ENCODE measurements at regions of chr11 and their contacts with region 1.

Region 1: DNA sequence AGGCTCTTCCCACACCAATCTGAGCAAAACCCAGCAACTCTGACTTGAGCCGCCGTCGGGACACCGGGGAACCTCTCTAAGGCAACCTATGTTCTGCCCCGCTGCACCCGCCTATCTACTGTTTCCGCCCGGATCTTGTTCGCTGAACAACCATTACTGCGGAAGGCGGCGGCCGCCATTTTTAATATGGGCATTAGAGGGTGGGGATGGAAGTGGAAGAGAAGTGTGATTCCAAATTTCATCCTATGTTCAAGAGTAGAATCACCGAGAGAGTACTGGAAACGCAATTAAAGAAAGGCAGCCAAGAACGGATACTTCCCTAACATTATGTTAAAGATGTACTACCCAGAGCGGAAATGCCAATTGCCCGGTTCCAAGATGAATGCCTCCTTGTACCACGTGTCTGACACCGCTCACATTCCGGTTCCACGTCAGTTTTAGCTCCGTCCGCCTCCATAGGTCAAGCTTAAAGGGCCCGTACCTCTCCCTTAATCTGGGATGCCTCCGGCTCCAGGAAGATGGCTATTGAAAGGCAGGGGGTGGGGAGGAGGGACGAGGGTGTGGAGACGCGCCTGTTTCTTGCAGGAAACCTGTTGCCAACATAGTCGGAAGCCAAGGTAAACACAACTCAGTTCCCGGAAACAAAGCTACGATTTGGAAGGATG is at the start of gene DPAGT1:
- DNase-seq: peak; percentile 93
- ATAC-seq: peak; percentile 82
- H3K4me3 Mint-ChIP-seq: peak within 1 kb of the TSS; percentile 91
- H3K27ac Mint-ChIP-seq: peak within 1 kb of the TSS; percentile 97
- H3K4me1 Mint-ChIP-seq: peaks cover 33% of the 10 kb centered on the region
- H3K27me3 Mint-ChIP-seq: no peaks in the 10 kb centered on the region
- CTCF ChIP-seq: no peak
- total RNA-seq, gene DPAGT1: 51.1 to 52.2 TPM

Region 2: GRCh38 chr11:119067371-119068222 is 34.3 kb before region 1 on chr11 and contains the start of gene VPS11:
- CTCF ChIA-PET with region 1: interaction called, 7 read pairs
- POLR2A ChIA-PET with region 1: interaction called, 10 read pairs
- intact Hi-C with region 1: no loop called
- DNase-seq: peak; percentile 99
- ATAC-seq: peak; percentile 98
- H3K4me3 Mint-ChIP-seq: peak within 1 kb of the TSS; percentile 87
- H3K27ac Mint-ChIP-seq: peak within 1 kb of the TSS; percentile 94
- H3K4me1 Mint-ChIP-seq: peaks cover 34% of the 10 kb centered on the region
- H3K27me3 Mint-ChIP-seq: no peaks in the 10 kb centered on the region
- CTCF ChIP-seq: no peak
- total RNA-seq, gene VPS11: 17.1 to 17.2 TPM

Region 3: GRCh38 chr11:119115484-119116234 is 13.8 kb after region 1 on chr11:
- CTCF ChIA-PET with region 1: interaction called, 7 read pairs
- POLR2A ChIA-PET with region 1: interaction called, 107 read pairs
- intact Hi-C with region 1: no loop called
- DNase-seq: peak; percentile 52
- ATAC-seq: peak; percentile 71
- H3K4me3 Mint-ChIP-seq: peak overlapping the region; percentile 73
- H3K27ac Mint-ChIP-seq: peak overlapping the region; percentile 96
- H3K4me1 Mint-ChIP-seq: peaks cover 28% of the 10 kb centered on the region
- H3K27me3 Mint-ChIP-seq: no peaks in the 10 kb centered on the region
- CTCF ChIP-seq: no peak

Region 4: DNA sequence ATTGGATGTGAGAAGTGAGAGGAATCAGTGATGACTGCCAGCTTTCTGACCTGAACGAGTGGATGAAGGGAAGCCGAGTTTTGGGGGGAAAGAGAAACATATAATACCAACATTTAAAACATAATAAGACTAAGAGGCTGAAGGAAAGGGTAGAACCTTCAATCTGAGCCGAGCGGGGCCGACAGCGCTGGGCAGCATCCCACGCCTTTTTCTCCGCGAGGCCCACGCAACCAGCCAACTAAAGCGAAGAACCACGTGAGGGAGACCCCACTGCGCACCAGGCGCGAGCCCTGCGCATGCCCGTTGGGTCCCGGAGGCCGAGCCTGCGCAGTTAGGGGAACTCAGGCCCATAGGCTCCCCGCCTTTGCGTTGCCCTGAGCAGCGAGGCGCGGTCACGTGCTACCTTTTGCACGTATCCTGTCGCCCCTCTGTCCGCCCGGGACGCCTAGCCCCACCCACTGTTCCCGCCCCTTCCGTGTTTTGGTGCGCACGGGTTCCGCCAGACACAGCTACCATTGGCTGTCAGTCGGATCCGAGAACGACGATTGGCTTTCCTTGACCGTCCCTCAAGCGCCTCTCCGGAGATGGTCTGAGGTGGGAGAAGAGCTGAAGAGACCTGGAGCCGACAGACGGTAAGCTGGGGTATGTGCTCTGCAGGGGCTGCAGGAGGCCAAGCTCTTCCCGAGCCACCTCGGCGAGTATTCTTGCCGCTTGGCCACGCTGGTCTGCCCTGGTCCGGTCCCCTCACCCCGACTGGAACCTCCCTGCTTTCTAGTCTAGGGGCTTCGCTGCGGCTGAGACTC is 19.3 kb after region 1 on chr11 and contains the start of gene HINFP:
- CTCF ChIA-PET with region 1: interaction called, 7 read pairs
- POLR2A ChIA-PET with region 1: interaction called, 19 read pairs
- intact Hi-C with region 1: no loop called
- DNase-seq: peak; percentile 100
- ATAC-seq: peak; percentile 98
- H3K4me3 Mint-ChIP-seq: peak within 1 kb of the TSS; percentile 93
- H3K27ac Mint-ChIP-seq: peak within 1 kb of the TSS; percentile 89
- H3K4me1 Mint-ChIP-seq: peaks cover 29% of the 10 kb centered on the region
- H3K27me3 Mint-ChIP-seq: no peaks in the 10 kb centered on the region
- CTCF ChIP-seq: no peak
- total RNA-seq, gene HINFP: 23.9 to 26.5 TPM

Measured in activated CD8-positive, alpha-beta T cell treated with anti-CD3 and anti-CD28 coated beads for 36 hours (primary cell).